ENCODE measurements at regions of chr10 and their contacts with region 1.

Region 1: GRCh38 chr10:131250454-131251145 is 60.9 kb downstream of the TCERG1L start:
- DNase-seq: peak in 1 of 5 donors; percentile 26
- H3K4me3 ChIP-seq: no peak overlapping the region
- H3K27ac ChIP-seq: no peak overlapping the region
- H3K4me1 ChIP-seq: no peaks in the 10 kb centered on the region
- H3K27me3 ChIP-seq: no peaks in the 10 kb centered on the region
- CTCF ChIP-seq: no peak
- EP300 ChIP-seq: no peak
- POLR2A ChIP-seq: no peak

Region 2: DNA sequence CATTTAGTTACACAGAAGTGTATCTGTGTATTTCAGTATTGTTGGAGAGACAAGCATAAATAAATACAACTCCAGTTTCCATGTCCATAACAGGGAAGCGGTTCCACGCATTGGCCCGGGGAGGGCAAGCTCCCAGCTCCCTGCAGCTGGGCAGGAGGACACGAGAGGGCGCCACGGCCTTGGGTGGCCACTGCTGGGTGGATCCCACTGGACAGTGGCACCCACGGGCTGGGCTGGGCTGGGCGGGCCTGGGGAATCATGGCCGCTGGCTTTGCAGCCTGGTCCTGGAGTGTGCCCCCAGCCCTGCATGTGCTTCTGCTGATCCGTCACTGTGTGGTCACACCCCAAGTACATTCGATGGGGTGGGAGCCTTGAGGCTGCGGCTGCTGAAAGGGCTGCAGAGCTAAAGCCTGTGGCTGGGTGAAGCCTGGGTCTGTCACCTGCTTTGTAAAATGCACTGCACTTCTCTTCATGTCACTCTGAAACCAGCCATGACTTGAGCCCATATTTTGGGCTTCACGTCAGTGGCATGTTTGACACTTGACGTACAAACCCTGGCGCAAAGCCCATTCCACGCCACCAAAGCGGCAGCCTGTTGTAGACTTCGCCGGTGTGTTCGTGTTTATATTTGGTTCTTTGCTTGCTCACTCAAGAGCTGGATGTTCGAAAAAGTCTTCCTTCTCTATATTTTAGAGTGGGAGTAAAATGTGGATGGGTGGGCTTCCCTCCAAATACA is 1108.9 kb after region 1 on chr10:
- intact Hi-C with region 1: loop called in 1 of 4 experiments (anchors 5 kb)
- DNase-seq: peak in 1 of 5 donors; percentile 36
- H3K4me3 ChIP-seq: no peak overlapping the region
- H3K27ac ChIP-seq: no peak overlapping the region
- H3K4me1 ChIP-seq: no peaks in the 10 kb centered on the region
- H3K27me3 ChIP-seq: no peaks in the 10 kb centered on the region
- CTCF ChIP-seq: no peak
- EP300 ChIP-seq: no peak
- POLR2A ChIP-seq: no peak